Activated CD4-positive, alpha-beta memory T cell treated with anti-CD3 and anti-CD28 coated beads for 36 hours (primary cell): ENCODE measurements at regions of chr9 and their contacts with region 1.

Region 1: GRCh38 chr9:37408933-37409710 is 13.4 kb upstream of the GRHPR start:
- DNase-seq: peak; percentile 95
- H3K4me3 Mint-ChIP-seq: no peak overlapping the region
- H3K27ac Mint-ChIP-seq: peak overlapping the region; percentile 78
- H3K4me1 Mint-ChIP-seq: peaks cover 43% of the 10 kb centered on the region
- H3K27me3 Mint-ChIP-seq: peaks cover 6% of the 10 kb centered on the region

Region 2: DNA sequence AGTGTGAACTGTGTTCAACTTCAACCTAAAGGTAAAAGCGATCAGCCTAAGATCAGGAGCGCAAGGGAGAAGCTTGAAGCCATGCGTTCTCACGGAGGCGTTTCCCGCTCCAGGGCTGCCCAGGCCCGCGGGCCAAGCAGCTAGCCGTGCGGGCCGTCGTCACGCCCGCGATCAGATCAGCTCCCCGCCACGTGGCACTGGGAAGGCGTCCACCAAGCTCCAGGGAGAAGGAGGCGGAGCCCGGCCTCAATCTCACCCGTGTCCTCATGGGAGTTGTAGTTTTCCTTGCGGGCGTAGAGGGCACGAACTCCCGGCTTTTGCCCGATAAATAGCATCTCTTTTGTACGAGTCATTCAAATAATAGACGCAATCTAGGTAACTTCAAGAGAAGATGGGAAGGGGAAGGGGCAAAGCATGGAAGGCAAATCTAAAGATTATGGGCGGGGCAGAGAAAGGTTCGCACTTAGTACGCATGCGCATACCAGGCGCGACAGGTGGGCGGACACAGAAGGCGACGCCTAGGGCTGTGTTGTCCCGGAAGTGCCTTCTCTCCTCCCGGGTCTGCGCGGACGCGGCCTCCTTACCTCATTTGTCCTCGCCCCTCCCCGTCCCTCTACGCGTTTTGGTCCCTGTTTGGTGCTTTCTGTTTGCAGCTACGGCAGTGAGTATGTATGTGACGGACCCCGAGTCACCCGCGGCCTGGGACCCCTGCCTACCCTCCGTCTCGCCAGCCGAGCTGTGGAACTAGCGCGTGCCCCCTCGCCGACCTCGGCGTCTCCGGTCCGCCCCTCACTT is 329.6 kb before region 1 on chr9:
- CTCF ChIA-PET with region 1: no interaction called
- POLR2A ChIA-PET with region 1: no interaction called
- intact Hi-C with region 1: loop called (anchors 1 kb)
- DNase-seq: peak; percentile 96
- H3K4me3 Mint-ChIP-seq: peak overlapping the region; percentile 98
- H3K27ac Mint-ChIP-seq: peak overlapping the region; percentile 93
- H3K4me1 Mint-ChIP-seq: peaks cover 46% of the 10 kb centered on the region
- H3K27me3 Mint-ChIP-seq: peaks cover 8% of the 10 kb centered on the region

Region 3: GRCh38 chr9:37290940-37291485 is 118.1 kb before region 1 on chr9:
- CTCF ChIA-PET with region 1: no interaction called
- POLR2A ChIA-PET with region 1: no interaction called
- intact Hi-C with region 1: loop called (anchors 2 kb)
- DNase-seq: no peak
- H3K4me3 Mint-ChIP-seq: peak overlapping the region; percentile 47
- H3K27ac Mint-ChIP-seq: peak overlapping the region; percentile 92
- H3K4me1 Mint-ChIP-seq: peaks cover 60% of the 10 kb centered on the region
- H3K27me3 Mint-ChIP-seq: no peaks in the 10 kb centered on the region

Region 4: GRCh38 chr9:37485389-37486219 is 76.5 kb after region 1 on chr9 and contains the start of gene POLR1E:
- CTCF ChIA-PET with region 1: interaction called, 4 read pairs
- POLR2A ChIA-PET with region 1: interaction called, 3 read pairs
- intact Hi-C with region 1: loop called (anchors 1 kb)
- DNase-seq: peak; percentile 97
- H3K4me3 Mint-ChIP-seq: peak within 1 kb of the TSS; percentile 88
- H3K27ac Mint-ChIP-seq: peak within 1 kb of the TSS; percentile 91
- H3K4me1 Mint-ChIP-seq: peaks cover 35% of the 10 kb centered on the region
- H3K27me3 Mint-ChIP-seq: peaks cover 6% of the 10 kb centered on the region
- total RNA-seq, gene POLR1E: 56.7 to 58.0 TPM

Region 5: GRCh38 chr9:37592108-37592951 is 183.2 kb after region 1 on chr9 and contains the start of gene TOMM5:
- CTCF ChIA-PET with region 1: interaction called, 3 read pairs
- POLR2A ChIA-PET with region 1: no interaction called
- intact Hi-C with region 1: loop called (anchors 5 kb)
- DNase-seq: peak; percentile 96
- H3K4me3 Mint-ChIP-seq: peak within 1 kb of the TSS; percentile 100
- H3K27ac Mint-ChIP-seq: peak within 1 kb of the TSS; percentile 98
- H3K4me1 Mint-ChIP-seq: peaks cover 32% of the 10 kb centered on the region
- H3K27me3 Mint-ChIP-seq: peaks cover 10% of the 10 kb centered on the region
- total RNA-seq, gene TOMM5: 146 to 147 TPM